AG04449 (cell line): ENCODE measurements at regions of chr12 and their contacts with region 1.

Region 1: GRCh38 chr12:53159195-53159839 is 21.2 kb upstream of the ZNF740 start:
- DNase-seq: no peak
- H3K4me3 ChIP-seq: no peak overlapping the region
- CTCF ChIP-seq: peak; percentile 98

Region 2: DNA sequence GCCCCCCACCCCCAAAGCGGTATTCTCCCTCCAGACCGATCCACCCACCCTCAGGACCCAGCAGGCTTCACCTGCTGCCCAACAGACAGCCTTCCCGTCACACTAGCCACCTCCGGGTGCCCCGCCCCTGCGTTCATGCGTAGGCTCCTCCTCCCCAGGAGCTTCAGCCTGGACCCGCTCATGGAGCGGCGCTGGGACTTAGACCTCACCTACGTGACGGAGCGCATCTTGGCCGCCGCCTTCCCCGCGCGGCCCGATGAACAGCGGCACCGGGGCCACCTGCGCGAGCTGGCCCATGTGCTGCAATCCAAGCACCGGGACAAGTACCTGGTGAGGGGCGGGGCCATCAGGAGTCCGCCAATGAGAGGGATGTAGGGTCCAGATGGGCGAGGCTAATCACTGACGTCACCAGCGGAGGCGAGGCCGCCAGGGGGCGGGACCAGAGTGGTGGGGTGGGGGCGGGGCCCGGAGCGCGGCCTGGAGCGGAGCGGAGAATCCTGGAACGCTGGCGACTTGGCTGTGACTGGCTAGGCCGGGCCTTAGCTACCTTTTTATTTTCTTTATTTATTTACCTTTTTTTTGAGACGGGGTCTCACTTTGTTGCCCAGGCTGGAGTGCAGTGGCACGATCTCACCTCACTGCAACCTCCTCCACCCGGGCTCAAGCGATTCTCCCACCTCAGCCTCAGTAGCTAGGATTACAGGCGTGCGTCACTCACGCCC is 105.0 kb before region 1 on chr12:
- CTCF ChIA-PET with region 1: interaction called, 14 read pairs
- POLR2A ChIA-PET with region 1: no interaction called
- DNase-seq: no peak
- H3K4me3 ChIP-seq: peak overlapping the region; percentile 49
- CTCF ChIP-seq: no peak

Region 3: DNA sequence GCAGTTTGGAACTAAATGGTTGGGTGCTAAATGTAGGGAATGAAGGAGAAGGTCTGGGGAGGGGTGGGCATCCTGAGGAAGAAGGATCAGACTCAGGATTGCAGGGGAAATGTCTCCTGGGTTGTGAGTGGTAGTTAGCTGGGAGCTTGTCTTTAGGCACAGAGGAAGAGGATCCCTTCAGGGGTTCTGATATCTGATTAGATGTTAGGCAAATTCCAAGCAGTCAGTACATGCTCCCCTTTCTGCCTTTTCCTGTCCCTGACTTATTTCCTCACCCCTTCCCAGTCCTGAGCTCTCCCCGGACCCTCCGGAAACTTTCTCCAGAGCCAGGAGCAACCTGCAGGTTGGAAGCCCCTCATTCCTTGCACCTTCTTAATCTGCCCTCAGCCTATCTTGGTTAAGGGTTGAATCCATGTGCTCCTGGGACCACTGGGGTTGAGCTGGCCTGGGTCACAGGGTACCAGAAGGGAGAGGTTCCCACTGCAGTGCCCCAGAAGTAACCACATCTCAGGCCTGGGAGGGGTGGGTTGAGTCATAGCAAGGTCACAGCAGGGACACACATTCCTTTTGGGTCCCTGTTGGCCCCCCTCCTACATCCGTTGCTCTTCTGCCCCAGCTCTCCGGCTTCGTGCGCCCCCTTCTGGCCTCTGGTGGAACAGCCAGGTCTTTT is 60.2 kb before region 1 on chr12:
- CTCF ChIA-PET with region 1: interaction called, 34 read pairs
- POLR2A ChIA-PET with region 1: interaction called, 3 read pairs
- DNase-seq: peak; percentile 88
- H3K4me3 ChIP-seq: peak overlapping the region; percentile 73
- CTCF ChIP-seq: peak; percentile 92

Region 4: GRCh38 chr12:53171725-53172329 is 12.5 kb after region 1 on chr12:
- CTCF ChIA-PET with region 1: interaction called, 148 read pairs
- POLR2A ChIA-PET with region 1: interaction called, 3 read pairs
- DNase-seq: no peak
- H3K4me3 ChIP-seq: no peak overlapping the region
- CTCF ChIP-seq: no peak

Region 5: GRCh38 chr12:53200458-53201176 is 41.3 kb after region 1 on chr12:
- CTCF ChIA-PET with region 1: interaction called, 81 read pairs
- POLR2A ChIA-PET with region 1: no interaction called
- DNase-seq: no peak
- H3K4me3 ChIP-seq: no peak overlapping the region
- CTCF ChIP-seq: no peak

Region 6: GRCh38 chr12:53267999-53268647 is 108.8 kb after region 1 on chr12 and contains the start of gene ESPL1:
- CTCF ChIA-PET with region 1: interaction called, 30 read pairs
- POLR2A ChIA-PET with region 1: no interaction called
- DNase-seq: no peak
- H3K4me3 ChIP-seq: peak within 1 kb of the TSS; percentile 95
- CTCF ChIP-seq: peak; percentile 17

Region 7: DNA sequence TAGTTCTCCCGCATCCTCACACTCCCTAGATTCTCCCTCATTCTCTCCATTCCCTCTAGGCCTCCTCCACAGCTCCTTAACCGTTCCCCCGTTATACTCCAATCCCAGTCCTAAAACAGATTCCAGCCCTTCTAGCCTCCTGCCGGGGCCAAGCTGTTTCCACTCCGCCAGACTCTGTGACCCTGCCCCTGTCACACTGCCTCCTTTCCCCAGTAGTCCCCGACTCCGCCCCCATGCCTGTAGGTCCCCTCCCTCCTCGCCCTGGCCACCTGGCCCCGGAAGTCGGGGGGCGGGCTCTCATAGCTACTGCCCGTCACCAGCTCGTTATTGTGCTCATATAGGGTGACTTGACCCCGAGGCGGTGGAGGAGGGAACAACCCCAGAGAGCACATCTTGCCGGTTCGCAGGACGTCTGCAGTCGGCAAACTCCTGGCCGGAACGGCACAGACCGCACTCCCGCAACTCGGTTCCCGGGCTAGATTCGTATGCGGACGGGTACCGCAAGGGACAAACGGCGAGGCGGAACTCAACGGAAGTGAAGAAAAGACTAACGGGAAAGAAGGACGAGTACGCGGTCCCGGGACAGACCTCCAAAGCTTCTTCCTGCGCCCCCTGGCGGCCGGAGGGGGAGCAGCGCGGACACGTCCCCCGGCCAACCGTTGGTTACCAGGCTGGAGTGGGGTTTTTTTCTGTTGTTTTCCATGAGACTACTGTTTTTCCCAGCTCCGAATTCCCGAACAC is 161.9 kb after region 1 on chr12 and contains the start of gene AAAS:
- CTCF ChIA-PET with region 1: interaction called, 43 read pairs
- POLR2A ChIA-PET with region 1: interaction called, 3 read pairs
- DNase-seq: peak; percentile 72
- H3K4me3 ChIP-seq: peak within 1 kb of the TSS; percentile 97
- CTCF ChIP-seq: peak; percentile 99